ENCODE measurements at regions of chr7 and their contacts with region 1.

Region 1: GRCh38 chr7:153835104-153835503 is 217.1 kb upstream of the DPP6 start:
- DNase-seq: no peak
- H3K4me3 Mint-ChIP-seq: no peak overlapping the region
- H3K27ac Mint-ChIP-seq: no peak overlapping the region
- H3K4me1 Mint-ChIP-seq: no peaks in the 10 kb centered on the region
- H3K27me3 Mint-ChIP-seq: no peaks in the 10 kb centered on the region
- CTCF ChIP-seq: peak; percentile 28

Region 2: DNA sequence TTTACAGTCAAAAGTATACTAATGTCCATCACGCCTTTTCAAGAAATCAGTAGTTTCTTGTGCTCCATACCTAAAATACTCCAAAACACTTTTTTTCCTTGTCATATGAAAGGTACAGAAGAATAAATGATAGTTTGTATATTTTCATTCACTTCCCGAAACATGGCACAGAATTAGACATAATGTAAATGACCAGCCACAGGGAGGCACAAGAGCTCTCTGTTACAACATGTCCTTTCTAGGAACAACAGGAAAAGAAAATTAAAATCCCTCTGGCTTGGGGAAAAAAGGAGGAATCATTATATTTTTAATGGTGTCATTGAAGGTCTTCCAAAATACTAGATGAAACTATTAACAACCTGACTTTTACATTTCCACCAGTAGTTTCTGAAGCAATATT is 744.3 kb before region 1 on chr7:
- CTCF ChIA-PET with region 1: no interaction called
- POLR2A ChIA-PET with region 1: no interaction called
- intact Hi-C with region 1: loop called (anchors 2 kb)
- DNase-seq: no peak
- H3K4me3 Mint-ChIP-seq: no peak overlapping the region
- H3K27ac Mint-ChIP-seq: no peak overlapping the region
- H3K4me1 Mint-ChIP-seq: peaks cover 5% of the 10 kb centered on the region
- H3K27me3 Mint-ChIP-seq: no peaks in the 10 kb centered on the region
- CTCF ChIP-seq: peak; percentile 11

Region 3: GRCh38 chr7:153193144-153193595 is 641.9 kb before region 1 on chr7:
- CTCF ChIA-PET with region 1: no interaction called
- POLR2A ChIA-PET with region 1: no interaction called
- intact Hi-C with region 1: loop called (anchors 1 kb)
- DNase-seq: no peak
- H3K4me3 Mint-ChIP-seq: no peak overlapping the region
- H3K27ac Mint-ChIP-seq: no peak overlapping the region
- H3K4me1 Mint-ChIP-seq: no peaks in the 10 kb centered on the region
- H3K27me3 Mint-ChIP-seq: no peaks in the 10 kb centered on the region
- CTCF ChIP-seq: peak; percentile 70

Region 4: GRCh38 chr7:153381275-153382040 is 453.6 kb before region 1 on chr7:
- CTCF ChIA-PET with region 1: no interaction called
- POLR2A ChIA-PET with region 1: no interaction called
- intact Hi-C with region 1: loop called (anchors 1 kb)
- DNase-seq: no peak
- H3K4me3 Mint-ChIP-seq: no peak overlapping the region
- H3K27ac Mint-ChIP-seq: peak overlapping the region; percentile 2
- H3K4me1 Mint-ChIP-seq: peaks cover 5% of the 10 kb centered on the region
- H3K27me3 Mint-ChIP-seq: no peaks in the 10 kb centered on the region
- CTCF ChIP-seq: peak; percentile 81